Caco-2 (cell line): ENCODE measurements at regions of chr7 and their contacts with region 1.

Region 1: GRCh38 chr7:66033471-66034385 is 41.9 kb upstream of the ASL start:
- DNase-seq: no peak
- H3K4me3 ChIP-seq: no peak overlapping the region
- H3K4me3 Mint-ChIP-seq: no peak overlapping the region
- H3K27ac Mint-ChIP-seq: no peak overlapping the region
- H3K4me1 ChIP-seq: no peaks in the 10 kb centered on the region
- H3K4me1 Mint-ChIP-seq: no peaks in the 10 kb centered on the region
- H3K27me3 ChIP-seq: no peaks in the 10 kb centered on the region
- H3K27me3 Mint-ChIP-seq: no peaks in the 10 kb centered on the region
- CTCF ChIP-seq: no peak

Region 2: GRCh38 chr7:65927489-65928448 is 106.0 kb before region 1 on chr7:
- CTCF ChIA-PET with region 1: no interaction called
- POLR2A ChIA-PET with region 1: no interaction called
- intact Hi-C with region 1: no loop called
- DNase-seq: peak; percentile 77 to 88
- H3K4me3 ChIP-seq: no peak overlapping the region
- H3K4me3 Mint-ChIP-seq: peak overlapping the region; percentile 13
- H3K27ac Mint-ChIP-seq: no peak overlapping the region
- H3K4me1 ChIP-seq: peaks cover 35% of the 10 kb centered on the region
- H3K4me1 Mint-ChIP-seq: peaks cover 19% of the 10 kb centered on the region
- H3K27me3 ChIP-seq: no peaks in the 10 kb centered on the region
- H3K27me3 Mint-ChIP-seq: no peaks in the 10 kb centered on the region
- CTCF ChIP-seq: no peak

Region 3: DNA sequence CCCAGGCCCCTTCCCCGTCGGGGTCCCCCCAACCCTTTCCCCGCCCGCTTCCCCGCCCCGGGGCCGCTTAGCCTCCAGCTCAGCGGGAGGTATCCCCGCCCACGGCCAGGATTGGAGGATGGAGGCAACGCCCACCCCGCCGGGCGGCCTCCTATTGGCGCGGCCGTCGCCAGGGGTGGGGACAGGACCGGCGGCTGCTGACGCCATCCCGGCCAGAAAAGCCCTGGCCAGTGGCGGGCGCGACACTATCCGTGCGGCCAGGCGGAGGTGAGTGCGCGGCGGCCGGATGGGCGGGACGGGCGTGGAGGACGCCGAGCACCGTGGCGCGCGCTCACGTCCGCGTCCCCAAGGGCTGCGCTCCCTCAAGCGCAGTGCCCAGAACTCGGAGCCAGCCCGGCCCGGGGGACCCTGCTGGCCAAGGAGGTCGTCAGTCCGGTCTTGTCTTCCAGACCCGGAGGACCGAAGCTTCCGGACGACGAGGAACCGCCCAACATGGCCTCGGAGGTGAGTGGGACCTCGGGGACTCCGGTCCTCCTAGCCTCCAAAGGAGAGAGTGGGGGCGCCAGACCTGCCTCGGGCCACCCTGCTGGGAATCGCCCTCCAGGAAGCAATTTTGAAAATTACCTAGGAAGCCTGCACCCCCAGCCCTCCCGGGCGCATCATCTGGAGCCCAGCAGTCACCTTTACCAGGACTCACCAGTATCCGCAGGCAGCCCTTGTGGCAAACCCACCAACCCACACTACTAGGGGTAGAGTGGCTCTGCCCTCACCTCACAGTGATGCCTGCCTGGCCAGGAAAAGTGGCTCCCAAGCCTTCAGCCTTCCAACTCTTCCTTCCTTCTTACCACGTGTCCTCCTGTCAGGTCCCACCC is 42.1 kb after region 1 on chr7 and contains the start of gene ASL:
- CTCF ChIA-PET with region 1: interaction called, 26 read pairs
- POLR2A ChIA-PET with region 1: interaction called, 5 read pairs
- intact Hi-C with region 1: loop called (anchors 1 kb)
- DNase-seq: peak; percentile 94 to 98
- H3K4me3 ChIP-seq: peak within 1 kb of the TSS; percentile 82
- H3K4me3 Mint-ChIP-seq: peak within 1 kb of the TSS; percentile 93
- H3K27ac Mint-ChIP-seq: peak within 1 kb of the TSS; percentile 34
- H3K4me1 ChIP-seq: peaks cover 9% of the 10 kb centered on the region
- H3K4me1 Mint-ChIP-seq: no peaks in the 10 kb centered on the region
- H3K27me3 ChIP-seq: no peaks in the 10 kb centered on the region
- H3K27me3 Mint-ChIP-seq: no peaks in the 10 kb centered on the region
- CTCF ChIP-seq: no peak
- total RNA-seq, gene ASL: 54.9 and 64.0 TPM in 2 replicates

Region 4: GRCh38 chr7:66099616-66100474 is 66.1 kb after region 1 on chr7:
- CTCF ChIA-PET with region 1: no interaction called
- POLR2A ChIA-PET with region 1: interaction called, 10 read pairs
- intact Hi-C with region 1: no loop called
- DNase-seq: peak; percentile 74 to 91
- H3K4me3 ChIP-seq: peak overlapping the region; percentile 29
- H3K4me3 Mint-ChIP-seq: peak overlapping the region; percentile 79
- H3K27ac Mint-ChIP-seq: peak overlapping the region; percentile 71
- H3K4me1 ChIP-seq: no peaks in the 10 kb centered on the region
- H3K4me1 Mint-ChIP-seq: peaks cover 8% of the 10 kb centered on the region
- H3K27me3 ChIP-seq: no peaks in the 10 kb centered on the region
- H3K27me3 Mint-ChIP-seq: no peaks in the 10 kb centered on the region
- CTCF ChIP-seq: no peak

Region 5: GRCh38 chr7:66140924-66141323 is 107.2 kb after region 1 on chr7:
- CTCF ChIA-PET with region 1: interaction called, 5 read pairs
- POLR2A ChIA-PET with region 1: interaction called, 6 read pairs
- intact Hi-C with region 1: loop called (anchors 10 kb)
- DNase-seq: peak; percentile 55 to 59
- H3K4me3 ChIP-seq: no peak overlapping the region
- H3K4me3 Mint-ChIP-seq: no peak overlapping the region
- H3K27ac Mint-ChIP-seq: peak overlapping the region; percentile 43
- H3K4me1 ChIP-seq: peaks cover 28% of the 10 kb centered on the region
- H3K4me1 Mint-ChIP-seq: peaks cover 40% of the 10 kb centered on the region
- H3K27me3 ChIP-seq: no peaks in the 10 kb centered on the region
- H3K27me3 Mint-ChIP-seq: no peaks in the 10 kb centered on the region
- CTCF ChIP-seq: peak in 1 of 2 experiments; percentile 80

Region 6: DNA sequence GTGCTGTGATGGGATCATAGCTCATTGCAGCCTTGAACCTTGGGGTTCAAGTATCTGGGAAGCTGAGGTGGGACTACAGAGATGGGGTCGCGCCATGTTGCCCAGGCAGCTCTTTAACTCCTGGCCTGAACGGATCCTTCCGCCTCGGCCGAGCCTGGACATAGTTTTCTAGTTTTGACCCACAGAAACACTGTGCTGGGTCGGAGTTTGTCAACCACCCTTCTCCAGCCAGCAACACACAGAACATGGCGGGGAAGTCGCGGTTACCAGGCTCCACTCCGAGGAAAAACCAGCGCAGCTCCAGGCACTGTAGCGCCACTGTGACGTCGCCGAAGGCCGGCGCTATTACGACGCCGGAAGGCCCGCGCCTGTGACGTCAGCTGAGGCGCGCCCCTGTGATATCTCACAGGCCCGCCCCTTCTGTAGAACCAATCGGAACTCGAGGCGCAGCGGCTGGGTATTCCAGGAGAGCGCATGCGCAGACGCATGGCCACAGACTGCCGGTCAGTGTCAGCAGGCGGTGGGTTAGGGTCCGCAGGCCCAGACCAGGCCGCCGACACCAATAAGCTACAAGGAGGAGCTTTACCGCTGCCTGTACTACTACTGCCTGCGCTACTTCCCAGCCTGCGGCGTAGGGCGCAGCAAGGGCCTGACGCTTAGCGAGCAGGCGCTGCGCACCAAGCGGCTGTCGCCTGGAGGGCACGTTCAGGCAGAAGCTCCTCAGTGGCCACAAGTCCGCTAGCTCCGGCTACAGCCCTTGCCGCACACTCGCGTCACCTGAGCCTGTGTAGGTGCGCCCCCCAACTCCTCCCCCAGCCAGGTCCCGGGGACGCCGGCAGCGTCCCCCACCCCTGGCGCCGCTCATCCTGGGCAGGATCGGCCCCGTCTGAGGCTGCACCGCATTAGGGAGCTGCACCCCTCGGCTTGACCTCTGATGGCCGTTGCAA is 459.8 kb after region 1 on chr7:
- CTCF ChIA-PET with region 1: interaction called, 8 read pairs
- POLR2A ChIA-PET with region 1: interaction called, 23 read pairs
- intact Hi-C with region 1: loop called (anchors 1 kb)
- DNase-seq: peak; percentile 98 to 99
- H3K4me3 ChIP-seq: peak overlapping the region; percentile 61
- H3K4me3 Mint-ChIP-seq: peak overlapping the region; percentile 84
- H3K27ac Mint-ChIP-seq: peak overlapping the region; percentile 98
- H3K4me1 ChIP-seq: 0 out of 2 replicates have a peak, but pooled peaks cover 5% of the 10 kb centered on the region
- H3K4me1 Mint-ChIP-seq: no peaks in the 10 kb centered on the region
- H3K27me3 ChIP-seq: no peaks in the 10 kb centered on the region
- H3K27me3 Mint-ChIP-seq: no peaks in the 10 kb centered on the region
- CTCF ChIP-seq: peak in 1 of 2 experiments; percentile 29

Region 7: GRCh38 chr7:66894463-66895080 is 860.8 kb after region 1 on chr7:
- CTCF ChIA-PET with region 1: interaction called, 4 read pairs
- POLR2A ChIA-PET with region 1: no interaction called
- intact Hi-C with region 1: loop called (anchors 5 kb)
- DNase-seq: peak in 1 of 2 experiments; percentile 44
- H3K4me3 ChIP-seq: no peak overlapping the region
- H3K4me3 Mint-ChIP-seq: no peak overlapping the region
- H3K27ac Mint-ChIP-seq: no peak overlapping the region
- H3K4me1 ChIP-seq: no peaks in the 10 kb centered on the region
- H3K4me1 Mint-ChIP-seq: no peaks in the 10 kb centered on the region
- H3K27me3 ChIP-seq: no peaks in the 10 kb centered on the region
- H3K27me3 Mint-ChIP-seq: no peaks in the 10 kb centered on the region
- CTCF ChIP-seq: peak in 1 of 2 experiments; percentile 30